ENCODE measurements at regions of chr12 and their contacts with region 1.

Region 1: DNA sequence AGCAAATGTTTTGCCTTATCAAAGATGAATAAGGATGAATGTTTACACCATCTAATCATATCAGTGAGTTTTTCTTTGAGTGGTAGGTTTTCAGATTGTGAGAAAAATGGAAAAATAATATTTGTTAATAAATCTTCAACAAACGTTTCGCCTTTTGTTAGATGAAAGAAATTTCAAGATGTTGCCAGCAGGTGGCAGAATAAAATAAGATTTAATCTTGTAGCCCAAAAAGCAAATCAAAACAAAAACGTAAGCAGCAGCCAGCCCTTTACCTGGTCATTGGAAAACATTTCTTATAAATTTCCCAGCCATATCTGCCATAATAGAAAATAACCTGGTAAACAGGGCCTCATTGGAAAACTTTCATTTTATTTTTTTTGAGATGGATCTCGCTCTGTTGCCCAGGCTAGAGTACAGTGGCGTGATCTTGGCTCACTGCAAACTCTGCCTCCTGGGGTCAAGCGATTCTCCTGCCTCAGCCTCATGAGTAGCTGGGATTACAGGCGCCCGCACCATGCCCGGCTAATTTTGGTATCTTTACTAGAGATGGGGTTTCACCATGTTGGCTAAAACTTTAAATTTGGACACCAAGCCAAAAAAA is 15.4 kb upstream of the TMEM120B start:
- DNase-seq: no peak
- H3K4me3 ChIP-seq: no peak overlapping the region
- H3K27ac ChIP-seq: no peak overlapping the region
- H3K4me1 ChIP-seq: no peaks in the 10 kb centered on the region
- H3K27me3 ChIP-seq: no peaks in the 10 kb centered on the region
- CTCF ChIP-seq: peak; percentile 33 to 85 (median 76)
- EP300 ChIP-seq: no peak
- POLR2A ChIP-seq: no peak

Region 2: GRCh38 chr12:121773011-121773777 is 76.0 kb after region 1 on chr12:
- intact Hi-C with region 1: loop called in 3 of 4 experiments (anchors 5 kb)
- DNase-seq: peak in 4 of 5 donors; percentile 50 to 77 (median 63)
- H3K4me3 ChIP-seq: no peak overlapping the region
- H3K27ac ChIP-seq: no peak overlapping the region
- H3K4me1 ChIP-seq: no peaks in the 10 kb centered on the region
- H3K27me3 ChIP-seq: no peaks in the 10 kb centered on the region
- CTCF ChIP-seq: peak; percentile 59 to 61 (median 60)
- EP300 ChIP-seq: no peak
- POLR2A ChIP-seq: no peak

Region 3: DNA sequence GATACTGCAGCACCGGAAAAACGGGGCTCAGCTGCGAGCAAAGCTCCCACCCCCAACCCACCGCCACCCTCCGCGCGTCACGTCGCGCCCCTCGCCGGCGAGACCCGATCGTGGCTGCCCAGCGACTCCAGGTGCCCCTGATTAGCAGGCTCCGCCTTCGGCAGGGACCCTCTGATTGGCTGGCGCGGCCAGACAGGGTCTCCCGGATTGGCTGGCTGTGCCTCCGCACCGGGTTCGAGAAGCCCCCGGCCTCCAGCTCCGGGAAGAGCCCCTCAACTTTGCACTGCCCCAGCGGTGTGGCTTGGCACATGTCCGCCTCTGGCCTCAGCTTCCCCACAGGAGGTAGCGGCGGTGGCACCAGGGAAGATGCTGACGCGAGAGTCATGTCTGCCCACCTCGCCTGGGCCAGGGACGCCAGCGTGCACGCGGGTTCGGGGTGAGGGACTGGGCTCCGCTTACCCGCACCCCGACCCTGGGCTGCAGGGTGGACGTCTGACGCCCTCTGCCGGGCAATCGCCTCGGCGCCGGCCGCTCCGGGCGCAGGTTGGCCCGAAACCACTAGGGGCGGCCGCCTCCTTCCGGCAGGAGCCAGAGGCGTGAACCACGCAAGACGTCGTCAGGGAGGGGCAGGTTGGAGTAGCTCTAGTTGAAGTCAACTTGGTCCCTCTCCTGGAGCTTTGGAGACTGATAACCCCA is 96.8 kb after region 1 on chr12:
- intact Hi-C with region 1: loop called (anchors 2 to 5 kb)
- DNase-seq: peak; percentile 91 to 96 (median 92)
- H3K4me3 ChIP-seq: peak overlapping the region; percentile 42
- H3K27ac ChIP-seq: peak overlapping the region; percentile 66 to 77
- H3K4me1 ChIP-seq: peaks cover 25% of the 10 kb centered on the region
- H3K27me3 ChIP-seq: no peaks in the 10 kb centered on the region
- CTCF ChIP-seq: peak; percentile 98 to 100 (median 100)
- EP300 ChIP-seq: no peak
- POLR2A ChIP-seq: peak; percentile 34

Region 4: DNA sequence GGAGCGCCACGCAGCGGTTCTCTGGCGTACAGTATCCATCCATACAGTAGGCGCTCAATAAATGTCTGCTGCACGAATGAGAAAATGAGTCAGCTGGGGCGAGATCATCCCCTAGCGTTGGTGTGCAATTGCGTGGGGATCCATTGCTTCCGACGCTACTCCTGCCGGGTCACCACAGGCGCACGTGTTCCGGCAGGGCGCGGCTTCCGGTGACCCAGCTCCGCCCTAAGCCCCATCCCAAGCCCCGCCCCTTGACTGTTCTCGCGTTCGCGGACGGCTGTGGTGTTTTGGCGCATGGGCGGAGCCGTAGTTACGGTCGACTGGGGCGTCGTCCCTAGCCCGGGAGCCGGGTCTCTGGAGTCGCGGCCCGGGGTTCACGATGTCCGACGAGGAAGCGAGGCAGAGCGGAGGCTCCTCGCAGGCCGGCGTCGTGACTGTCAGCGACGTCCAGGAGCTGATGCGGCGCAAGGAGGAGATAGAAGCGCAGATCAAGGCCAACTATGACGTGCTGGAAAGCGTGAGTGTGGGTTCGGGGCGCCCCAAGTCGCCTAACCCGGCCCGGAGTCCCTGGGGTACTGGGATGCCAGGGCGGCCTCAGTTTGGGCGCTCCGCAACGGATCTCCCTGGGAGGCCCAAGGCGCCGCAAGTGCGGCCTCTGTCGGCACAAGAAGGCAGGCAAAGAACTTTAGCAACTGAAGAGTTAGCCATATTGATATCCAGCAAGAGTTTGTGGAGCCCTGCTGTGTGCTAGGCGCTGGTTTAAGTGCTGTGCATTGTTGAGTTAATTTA is 191.5 kb after region 1 on chr12 and contains the start of gene PSMD9:
- intact Hi-C with region 1: loop called in 3 of 4 experiments (anchors 10 kb)
- DNase-seq: peak; percentile 97 to 99 (median 98)
- H3K4me3 ChIP-seq: peak within 1 kb of the TSS; percentile 96
- H3K27ac ChIP-seq: peak within 1 kb of the TSS; percentile 85 to 86
- H3K4me1 ChIP-seq: peaks cover 10% of the 10 kb centered on the region
- H3K27me3 ChIP-seq: no peaks in the 10 kb centered on the region
- CTCF ChIP-seq: peak; percentile 44 to 70 (median 62)
- EP300 ChIP-seq: peak; percentile 26
- POLR2A ChIP-seq: no peak
- total RNA-seq, gene PSMD9: 24.4 to 57.0 (median 35.5) TPM

Region 5: GRCh38 chr12:121894633-121895032 is 197.4 kb after region 1 on chr12:
- intact Hi-C with region 1: loop called in 3 of 4 experiments (anchors 10 kb)
- DNase-seq: peak in 4 of 5 donors; percentile 37 to 63 (median 48)
- H3K4me3 ChIP-seq: no peak overlapping the region
- H3K27ac ChIP-seq: no peak overlapping the region
- H3K4me1 ChIP-seq: peaks cover 5% of the 10 kb centered on the region
- H3K27me3 ChIP-seq: no peaks in the 10 kb centered on the region
- CTCF ChIP-seq: peak in 2 of 3 donors; percentile 9 to 49
- EP300 ChIP-seq: no peak
- POLR2A ChIP-seq: no peak

Region 6: DNA sequence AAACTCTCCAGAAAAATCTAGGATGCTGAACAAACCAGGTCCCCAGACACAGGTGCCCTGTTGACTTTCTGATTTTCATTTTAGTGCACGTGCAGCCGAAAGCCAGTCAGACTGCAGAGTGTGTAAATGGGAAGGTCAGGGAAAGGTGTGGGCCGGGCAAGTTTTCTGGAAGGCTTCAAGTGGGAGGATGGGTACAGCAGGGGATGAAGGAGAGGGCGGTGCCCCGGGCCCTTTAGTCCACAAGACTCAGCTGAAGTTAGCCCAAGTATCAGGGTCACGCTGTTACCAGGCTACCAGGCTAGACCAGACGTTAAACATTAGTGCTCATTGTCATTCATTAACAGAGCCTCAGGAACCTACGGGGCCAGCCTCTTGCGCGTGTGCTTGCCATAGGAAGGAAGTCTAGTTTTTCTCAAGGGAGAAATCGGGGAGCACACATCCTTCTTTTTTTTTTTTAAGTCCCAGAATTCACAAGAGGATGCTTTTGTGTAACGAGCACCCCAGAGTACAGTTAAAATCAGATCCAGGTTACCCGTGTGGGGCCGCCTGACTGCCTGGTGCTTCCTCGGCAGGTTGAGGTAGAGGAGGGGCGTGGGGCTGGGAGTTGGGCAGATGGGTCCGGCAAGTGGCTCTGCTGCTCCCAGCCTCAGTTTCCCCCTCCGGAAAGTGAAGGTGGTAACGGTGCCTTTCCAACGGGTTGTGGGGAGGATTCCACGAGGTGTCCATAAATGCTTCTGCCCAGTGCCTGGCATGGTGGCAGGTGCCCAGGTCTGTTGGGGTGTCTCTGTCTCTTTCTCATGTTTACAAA is 343.6 kb after region 1 on chr12:
- intact Hi-C with region 1: no loop called
- DNase-seq: no peak
- H3K4me3 ChIP-seq: no peak overlapping the region
- H3K27ac ChIP-seq: no peak overlapping the region
- H3K4me1 ChIP-seq: no peaks in the 10 kb centered on the region
- H3K27me3 ChIP-seq: no peaks in the 10 kb centered on the region
- CTCF ChIP-seq: no peak
- EP300 ChIP-seq: no peak
- POLR2A ChIP-seq: no peak

Measured in ovary (tissue), 10 donors.